Astrocyte of the cerebellum (primary cell): ENCODE measurements at regions of chr1 and their contacts with region 1.

Region 1: DNA sequence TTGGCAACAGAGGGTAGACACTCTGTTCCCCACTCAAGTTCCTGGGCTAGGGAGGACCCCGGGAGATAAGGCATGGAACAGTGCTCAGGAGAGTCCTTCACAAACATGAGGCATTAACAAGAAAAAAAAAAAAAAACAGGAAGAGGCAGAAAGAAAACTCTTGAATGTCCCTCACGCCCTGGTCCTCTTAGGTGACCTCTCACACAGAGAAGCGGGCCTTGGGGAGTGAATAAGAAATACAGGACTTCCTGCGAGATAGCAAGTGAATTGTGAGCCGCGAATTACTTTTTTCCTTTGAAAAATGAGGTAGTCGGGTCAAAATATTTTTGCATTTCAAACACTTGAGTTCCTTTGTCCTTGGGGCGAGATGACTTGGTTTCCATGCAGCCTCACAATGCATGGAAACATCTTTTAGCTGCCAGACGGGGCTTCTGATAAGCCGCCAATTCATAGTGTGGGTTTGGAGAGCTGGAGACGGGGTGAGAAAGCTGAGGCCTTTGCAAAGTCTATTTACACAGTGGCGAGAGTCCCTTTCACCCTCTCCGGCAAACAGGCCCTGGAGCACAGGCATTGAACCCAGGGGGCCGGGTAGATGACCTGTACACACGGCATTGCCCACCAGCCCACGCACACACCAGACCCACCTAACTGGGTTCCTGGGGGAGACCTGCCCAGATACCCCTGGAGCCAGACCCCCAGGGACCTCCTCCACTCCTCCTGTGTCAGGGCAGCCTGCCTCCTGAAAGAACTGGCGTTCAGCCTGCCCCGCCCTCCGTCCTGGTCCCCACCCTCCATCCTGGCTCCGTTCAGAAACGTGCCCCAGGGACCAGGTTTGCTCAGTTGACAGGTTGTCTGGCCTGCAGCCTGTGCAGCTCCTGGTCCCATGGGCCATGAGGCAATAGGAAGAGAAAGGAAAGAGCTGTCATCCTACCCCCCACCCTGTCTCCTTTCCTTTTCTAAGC is 192.3 kb downstream of the PRDM16 start:
- DNase-seq: no peak
- H3K4me3 ChIP-seq: no peak overlapping the region
- CTCF ChIP-seq: no peak

Region 2: DNA sequence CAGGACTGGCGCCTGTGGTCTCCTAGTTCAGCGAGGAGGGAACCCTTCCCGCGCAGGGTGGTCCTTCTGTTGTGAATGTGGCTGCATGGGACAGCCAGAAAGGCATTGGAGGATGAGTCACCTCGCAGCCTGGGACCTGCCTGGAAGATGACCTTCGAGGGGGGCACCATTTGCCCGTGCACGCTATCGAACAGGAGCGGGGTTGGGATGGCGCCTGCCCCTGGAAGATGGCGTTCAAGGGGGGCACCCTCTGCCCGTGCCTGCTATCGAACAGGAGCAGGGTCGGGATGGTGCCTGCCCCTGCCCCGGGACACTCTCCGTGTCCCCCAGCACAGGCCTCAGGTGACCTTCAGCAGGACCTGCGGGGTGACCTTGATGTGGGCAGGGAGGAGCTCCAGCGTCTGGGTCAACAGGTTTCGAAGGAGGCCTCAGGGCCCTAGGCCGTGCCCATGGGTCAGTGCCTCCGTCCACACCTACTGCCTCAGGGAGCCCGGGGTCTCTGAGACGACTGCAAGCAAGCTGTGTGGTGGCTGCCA is 241.7 kb before region 1 on chr1:
- in situ Hi-C with region 1: no loop called
- DNase-seq: no peak
- H3K4me3 ChIP-seq: no peak overlapping the region
- CTCF ChIP-seq: no peak

Region 3: GRCh38 chr1:3031401-3032221 is 229.7 kb before region 1 on chr1:
- in situ Hi-C with region 1: no loop called
- DNase-seq: no peak
- H3K4me3 ChIP-seq: no peak overlapping the region
- CTCF ChIP-seq: no peak

Region 4: DNA sequence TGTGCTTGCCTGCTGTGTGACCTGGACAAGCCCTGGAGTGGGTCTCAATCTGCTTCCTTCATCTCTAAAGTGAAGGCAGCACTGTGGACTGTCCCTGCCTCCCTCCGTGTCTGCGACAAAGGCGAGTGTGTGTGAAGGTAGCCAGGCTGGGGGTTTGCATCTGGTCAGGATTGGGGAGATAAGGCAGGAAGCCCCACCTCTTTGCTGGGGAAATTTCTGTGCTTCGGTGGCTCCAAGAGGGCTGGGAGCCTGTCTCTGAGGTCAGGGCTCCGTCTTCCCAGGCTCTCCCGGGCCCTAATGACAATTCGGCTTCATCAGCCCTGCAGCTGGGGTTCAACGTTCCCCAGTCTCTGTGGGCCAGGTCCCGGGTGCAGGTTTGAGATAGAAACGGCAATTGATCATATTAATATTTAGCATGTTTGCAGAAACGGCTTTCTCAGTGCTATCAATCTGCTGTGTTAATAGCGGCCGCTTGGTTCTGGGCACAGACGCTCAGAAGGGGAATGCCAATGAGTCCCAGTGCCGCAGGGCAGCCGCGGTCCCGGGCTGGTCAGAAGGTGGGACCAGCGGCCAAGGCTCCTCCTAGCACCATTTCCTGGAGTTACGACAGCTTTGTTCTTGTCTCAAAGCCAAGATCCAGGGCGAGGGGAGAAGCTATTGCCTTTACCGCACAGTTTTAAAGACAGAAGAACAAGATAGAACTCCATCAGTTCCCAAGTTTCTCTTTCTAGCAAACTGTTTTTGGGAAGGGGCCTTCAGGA is 86.6 kb before region 1 on chr1:
- in situ Hi-C with region 1: loop called (anchors 5 kb)
- DNase-seq: peak; percentile 16
- H3K4me3 ChIP-seq: no peak overlapping the region
- CTCF ChIP-seq: no peak

Region 5: GRCh38 chr1:3219005-3219790 is 42.1 kb before region 1 on chr1:
- in situ Hi-C with region 1: no loop called
- DNase-seq: peak; percentile 63
- H3K4me3 ChIP-seq: no peak overlapping the region
- CTCF ChIP-seq: no peak

Region 6: DNA sequence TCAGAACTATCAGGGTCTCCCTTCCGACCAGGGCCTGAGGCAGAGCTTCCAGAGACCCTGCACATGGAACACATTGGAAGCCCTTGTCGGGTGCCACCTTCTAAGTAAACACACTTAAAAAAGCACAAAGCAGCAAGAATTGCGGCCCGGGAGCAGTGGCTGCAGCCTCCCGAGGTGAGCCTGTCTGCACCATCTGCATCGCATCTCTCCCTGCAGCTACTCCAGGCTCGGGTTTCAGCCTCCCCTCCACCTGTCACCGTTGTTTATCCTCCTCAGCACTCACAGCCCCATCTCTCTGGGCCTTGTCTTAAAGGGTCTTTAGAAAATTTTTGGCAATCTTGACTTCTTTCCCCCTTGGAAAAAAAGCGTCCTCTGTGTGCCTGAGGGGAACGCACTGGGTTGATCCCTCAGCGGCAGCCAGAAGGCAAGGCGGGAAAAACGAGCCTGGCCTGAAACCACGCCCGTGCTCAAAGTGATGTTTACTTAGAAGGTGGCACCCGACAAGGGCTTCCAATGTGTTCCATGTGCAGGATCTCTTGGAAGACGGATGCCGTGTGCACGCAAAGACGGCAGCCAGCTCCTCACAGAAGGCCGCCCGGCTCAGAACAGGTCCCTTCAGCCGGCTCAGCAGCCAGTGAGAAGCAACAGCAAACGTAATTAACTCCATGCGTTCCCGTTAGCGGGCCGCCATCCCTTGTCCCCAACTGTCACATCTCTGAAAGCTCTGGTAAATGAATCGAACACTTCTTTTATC is 98.2 kb after region 1 on chr1:
- in situ Hi-C with region 1: loop called (anchors 5 kb)
- DNase-seq: no peak
- H3K4me3 ChIP-seq: no peak overlapping the region
- CTCF ChIP-seq: no peak